Activated naive CD4-positive, alpha-beta T cell treated with anti-CD3 and anti-CD28 coated beads, Interleukin-2, amount 10 ng/mL, durations not matched to agents 7 days and 5 days (primary cell): ENCODE measurements at regions of chr14 and their contacts with region 1.

Region 1: DNA sequence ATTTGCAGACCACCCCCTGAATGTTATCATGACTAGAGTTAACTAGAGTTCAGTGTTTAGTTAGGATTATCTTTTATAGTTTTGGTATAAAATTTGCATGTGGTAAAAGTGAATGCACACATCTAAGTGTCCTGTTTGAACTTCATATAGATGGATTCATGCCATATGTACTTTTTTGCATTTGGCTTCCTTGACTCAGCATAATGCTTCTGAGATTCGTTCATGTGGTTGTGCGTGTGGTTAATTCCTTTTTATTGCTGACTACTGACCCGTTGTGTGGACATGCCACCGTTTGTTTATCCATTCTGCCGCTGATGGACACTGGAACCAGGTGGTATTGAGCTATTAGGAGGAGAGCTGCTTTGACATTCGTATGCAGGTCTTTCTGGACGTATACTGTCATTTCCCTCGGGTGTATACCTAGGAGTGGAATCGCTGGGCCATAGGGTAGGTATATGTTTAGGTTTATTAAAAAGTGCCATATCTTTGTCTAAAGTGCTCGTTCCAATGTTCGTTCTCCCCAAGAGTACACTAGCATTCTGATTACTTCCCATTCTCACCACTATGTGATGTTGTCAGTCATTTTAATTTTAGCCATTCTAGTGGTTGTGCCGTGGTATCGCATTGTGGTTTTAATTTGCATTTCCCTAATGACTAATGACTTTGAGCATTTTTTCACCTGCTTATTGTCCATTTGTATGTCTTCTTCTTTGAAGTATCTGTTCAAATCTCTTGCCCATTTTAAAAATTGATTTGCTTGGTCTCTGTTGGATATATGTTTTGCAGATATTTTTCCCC is 37.7 kb downstream of the RIN3 start:
- DNase-seq: no peak
- H3K4me3 Mint-ChIP-seq: no peak overlapping the region
- H3K27ac Mint-ChIP-seq: no peak overlapping the region
- H3K4me1 Mint-ChIP-seq: peaks cover 30% of the 10 kb centered on the region
- H3K27me3 Mint-ChIP-seq: peaks cover 33% of the 10 kb centered on the region

Region 2: DNA sequence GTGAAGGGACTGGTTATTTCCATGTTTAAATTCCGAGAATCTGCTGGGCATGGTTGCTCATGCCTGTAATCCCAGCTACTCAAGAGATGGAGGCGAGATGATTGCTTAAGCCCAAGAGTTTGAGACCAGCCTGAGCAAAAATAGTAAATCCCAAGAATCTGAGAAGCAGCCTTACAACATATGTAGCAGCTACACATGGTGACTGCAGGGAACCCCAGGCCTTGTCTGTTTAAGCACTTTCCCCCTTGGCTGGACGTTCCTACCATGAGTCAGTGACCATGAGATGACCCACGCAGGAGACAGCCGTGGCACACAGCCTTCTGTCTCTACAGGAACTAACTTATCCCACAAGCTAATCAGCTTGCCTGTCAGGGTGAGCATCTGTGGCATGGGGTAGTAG is 233.7 kb before region 1 on chr14:
- CTCF ChIA-PET with region 1: no interaction called
- DNase-seq: no peak
- H3K4me3 Mint-ChIP-seq: no peak overlapping the region
- H3K27ac Mint-ChIP-seq: no peak overlapping the region
- H3K4me1 Mint-ChIP-seq: peaks cover 8% of the 10 kb centered on the region
- H3K27me3 Mint-ChIP-seq: peaks cover 47% of the 10 kb centered on the region

Region 3: GRCh38 chr14:92680781-92681650 is 129.8 kb after region 1 on chr14:
- CTCF ChIA-PET with region 1: interaction called, 26 read pairs
- DNase-seq: peak; percentile 78
- H3K4me3 Mint-ChIP-seq: no peak overlapping the region
- H3K27ac Mint-ChIP-seq: peak overlapping the region; percentile 59
- H3K4me1 Mint-ChIP-seq: peaks cover 33% of the 10 kb centered on the region
- H3K27me3 Mint-ChIP-seq: no peaks in the 10 kb centered on the region